IMR-90 (cell line): ENCODE measurements at regions of chr5 and their contacts with region 1.

Region 1: DNA sequence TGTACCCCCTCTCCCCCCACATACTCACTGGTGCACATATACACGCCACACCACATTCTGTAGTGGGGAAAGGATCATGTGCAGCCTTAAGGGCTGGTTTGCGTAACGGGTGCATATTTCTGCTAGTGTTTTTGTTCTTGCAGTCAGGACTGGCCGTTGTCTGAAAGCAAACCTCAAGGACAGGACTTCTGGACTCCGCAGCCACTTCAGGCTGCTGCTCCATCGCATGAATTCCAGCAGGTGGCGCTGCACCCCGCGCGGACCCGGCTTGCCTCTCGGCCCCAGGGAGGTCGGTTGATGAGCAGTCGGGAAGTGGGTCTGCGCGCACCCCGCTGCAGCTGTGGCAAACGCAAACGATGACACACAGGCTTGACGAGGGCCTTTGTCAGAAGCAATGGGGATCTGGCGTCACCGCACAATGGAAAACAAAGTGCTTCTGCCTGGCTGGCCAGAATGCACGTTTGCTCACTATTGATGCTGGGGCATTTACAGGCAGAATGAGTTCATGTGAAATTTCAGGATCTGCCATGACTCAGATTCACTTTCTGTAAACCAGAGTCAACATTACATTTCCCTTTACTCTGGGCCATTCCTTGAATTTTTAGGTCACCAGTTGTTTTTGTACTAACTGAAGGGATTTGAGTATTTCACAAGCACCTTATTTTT is 36.3 kb upstream of the GLRX start:
- DNase-seq: peak; percentile 100
- ATAC-seq: peak; percentile 80
- H3K4me3 ChIP-seq: peak overlapping the region; percentile 2; the same call in 1 of the 2 replicates
- H3K27ac ChIP-seq: peak overlapping the region; percentile 99
- H3K4me1 ChIP-seq: peaks cover 38% of the 10 kb centered on the region
- H3K27me3 ChIP-seq: no peaks in the 10 kb centered on the region
- CTCF ChIP-seq: peak; percentile 99
- POLR2A ChIP-seq: peak; percentile 42; the same call in 1 of the 2 replicates
- RAD21 ChIP-seq: peak; percentile 98

Region 2: DNA sequence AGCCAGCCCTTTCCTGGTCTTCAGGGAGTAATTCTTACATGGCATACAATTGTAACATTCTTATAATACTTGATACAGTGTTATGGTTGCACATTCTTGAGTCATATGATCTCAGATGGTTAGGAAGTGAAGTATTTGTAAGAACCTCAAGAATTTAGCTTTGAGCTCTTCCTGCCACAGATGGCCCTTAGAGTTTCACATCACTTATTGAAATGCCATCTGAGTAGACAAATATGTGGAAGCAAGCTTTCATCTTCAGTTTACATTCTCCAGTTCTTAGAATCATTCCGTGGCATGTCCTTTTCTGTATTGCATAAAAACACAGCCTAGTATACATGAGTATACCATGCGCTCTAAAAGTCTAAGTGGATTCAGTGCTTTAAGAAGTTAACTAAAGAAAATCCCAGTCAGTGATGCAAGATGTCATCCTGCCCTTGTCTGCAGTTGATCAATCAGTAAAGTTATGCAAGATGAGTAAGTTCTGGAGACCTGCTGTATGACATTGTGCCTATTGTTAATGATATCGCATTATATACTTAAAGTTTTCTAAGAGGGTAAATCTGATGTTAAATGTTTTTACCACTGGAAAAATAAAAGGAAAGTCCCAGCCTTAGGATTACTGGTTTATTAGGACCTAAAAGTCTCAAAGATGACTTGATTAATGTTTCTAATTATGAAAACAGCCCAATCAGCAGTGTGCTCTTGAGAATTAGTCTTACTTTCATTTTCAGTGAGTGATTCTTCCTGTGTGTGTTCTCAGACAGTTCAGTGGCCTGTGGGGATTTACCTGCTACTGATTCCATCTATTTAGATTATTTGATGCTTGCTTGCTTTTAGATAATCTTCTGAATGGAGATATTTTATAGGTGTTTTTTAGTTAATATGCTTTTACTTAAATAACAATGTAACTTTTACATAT is 98.3 kb before region 1 on chr5:
- CTCF ChIA-PET with region 1: no interaction called
- POLR2A ChIA-PET with region 1: no interaction called
- dilution Hi-C with region 1: no loop called
- in situ Hi-C with region 1: no loop called
- intact Hi-C with region 1: no loop called
- DNase-seq: peak; percentile 99
- ATAC-seq: peak; percentile 75
- H3K4me3 ChIP-seq: no peak overlapping the region; the same call in 1 of the 2 replicates
- H3K27ac ChIP-seq: peak overlapping the region; percentile 16; the same call in 1 of the 2 replicates
- H3K4me1 ChIP-seq: peaks cover 28% of the 10 kb centered on the region
- H3K27me3 ChIP-seq: no peaks in the 10 kb centered on the region
- CTCF ChIP-seq: no peak
- POLR2A ChIP-seq: no peak
- RAD21 ChIP-seq: no peak

Region 3: DNA sequence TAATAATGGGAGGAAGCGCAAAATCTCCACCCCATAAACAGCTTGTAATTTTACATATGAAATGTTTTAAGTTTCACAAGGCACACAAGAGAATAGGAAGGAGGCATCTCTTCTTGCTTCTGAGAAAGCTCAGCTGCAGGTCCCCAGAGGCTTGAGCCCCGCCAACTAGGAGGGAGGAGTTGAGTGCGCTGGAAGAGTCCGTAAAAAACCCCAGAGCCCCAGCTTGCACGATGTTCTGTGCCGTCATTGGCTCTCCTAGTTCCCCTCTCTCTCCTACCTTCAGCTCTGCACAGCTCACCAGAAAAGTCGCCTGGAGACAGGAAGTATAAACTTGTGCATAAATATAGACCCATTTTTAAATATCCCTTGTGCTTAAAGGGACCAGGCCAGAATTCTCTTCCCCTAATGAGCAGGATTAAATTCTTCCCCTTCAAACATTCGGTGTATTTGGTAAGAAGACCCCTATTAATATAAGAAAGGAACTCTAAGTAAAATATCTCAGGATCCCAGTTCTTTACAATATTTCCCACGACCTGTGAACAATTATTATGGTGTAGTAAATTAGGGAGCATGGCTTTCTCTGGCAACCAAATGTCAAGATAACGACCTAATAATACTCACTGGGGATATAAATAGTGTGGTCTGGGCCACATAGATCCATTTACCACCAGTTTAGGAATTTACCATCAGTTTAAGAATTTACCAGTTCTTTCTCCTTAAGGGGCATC is 49.9 kb before region 1 on chr5:
- CTCF ChIA-PET with region 1: no interaction called
- POLR2A ChIA-PET with region 1: no interaction called
- dilution Hi-C with region 1: no loop called
- in situ Hi-C with region 1: no loop called
- intact Hi-C with region 1: no loop called
- DNase-seq: peak; percentile 52
- ATAC-seq: peak; percentile 27
- H3K4me3 ChIP-seq: no peak overlapping the region
- H3K27ac ChIP-seq: peak overlapping the region; percentile 1; the same call in 1 of the 2 replicates
- H3K4me1 ChIP-seq: peaks cover 16% of the 10 kb centered on the region
- H3K27me3 ChIP-seq: no peaks in the 10 kb centered on the region
- CTCF ChIP-seq: no peak
- POLR2A ChIP-seq: no peak
- RAD21 ChIP-seq: no peak

Region 4: GRCh38 chr5:95846554-95847260 is 12.1 kb before region 1 on chr5:
- CTCF ChIA-PET with region 1: no interaction called
- POLR2A ChIA-PET with region 1: interaction called, 11 read pairs
- dilution Hi-C with region 1: no loop called
- in situ Hi-C with region 1: no loop called
- intact Hi-C with region 1: no loop called
- DNase-seq: peak; percentile 79
- ATAC-seq: peak; percentile 92
- H3K4me3 ChIP-seq: no peak overlapping the region
- H3K27ac ChIP-seq: no peak overlapping the region
- H3K4me1 ChIP-seq: peaks cover 16% of the 10 kb centered on the region
- H3K27me3 ChIP-seq: no peaks in the 10 kb centered on the region
- CTCF ChIP-seq: peak; percentile 96
- POLR2A ChIP-seq: peak; percentile 50
- RAD21 ChIP-seq: peak; percentile 93

Region 5: GRCh38 chr5:95973793-95974325 is 115.1 kb after region 1 on chr5:
- CTCF ChIA-PET with region 1: no interaction called
- POLR2A ChIA-PET with region 1: no interaction called
- dilution Hi-C with region 1: no loop called
- in situ Hi-C with region 1: no loop called
- intact Hi-C with region 1: no loop called
- DNase-seq: peak; percentile 92
- ATAC-seq: peak; percentile 85
- H3K4me3 ChIP-seq: no peak overlapping the region
- H3K27ac ChIP-seq: peak overlapping the region; percentile 70
- H3K4me1 ChIP-seq: peaks cover 13% of the 10 kb centered on the region
- H3K27me3 ChIP-seq: no peaks in the 10 kb centered on the region
- CTCF ChIP-seq: no peak
- POLR2A ChIP-seq: no peak
- RAD21 ChIP-seq: no peak

Region 6: GRCh38 chr5:96017951-96018350 is 159.2 kb after region 1 on chr5:
- CTCF ChIA-PET with region 1: no interaction called
- POLR2A ChIA-PET with region 1: no interaction called
- dilution Hi-C with region 1: no loop called
- in situ Hi-C with region 1: no loop called
- intact Hi-C with region 1: loop called (anchors 2 kb)
- DNase-seq: peak; percentile 98
- ATAC-seq: peak; percentile 80
- H3K4me3 ChIP-seq: no peak overlapping the region
- H3K27ac ChIP-seq: peak overlapping the region; percentile 70; the same call in 1 of the 2 replicates
- H3K4me1 ChIP-seq: peaks cover 10% of the 10 kb centered on the region
- H3K27me3 ChIP-seq: no peaks in the 10 kb centered on the region
- CTCF ChIP-seq: no peak
- POLR2A ChIP-seq: no peak
- RAD21 ChIP-seq: no peak

Region 7: DNA sequence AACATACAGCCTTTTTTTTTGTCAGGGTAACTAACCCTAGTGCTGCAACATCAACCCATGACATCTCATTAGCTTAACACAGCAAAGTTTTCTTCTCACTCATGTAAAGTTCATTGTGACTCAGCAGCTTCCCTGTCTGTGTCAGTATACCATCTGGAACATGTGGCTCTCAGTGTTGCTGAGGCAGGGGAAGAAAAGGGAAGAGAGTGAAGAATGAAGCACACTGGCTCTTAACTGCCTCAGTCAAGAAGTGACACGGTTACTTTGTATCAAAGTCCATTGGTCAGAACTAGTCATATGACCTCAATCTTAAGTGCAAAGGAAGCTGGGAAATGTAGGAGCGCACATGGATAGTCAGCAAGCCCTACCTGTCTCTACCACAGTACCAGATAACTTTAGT is 287.9 kb after region 1 on chr5:
- CTCF ChIA-PET with region 1: no interaction called
- POLR2A ChIA-PET with region 1: no interaction called
- dilution Hi-C with region 1: no loop called
- in situ Hi-C with region 1: no loop called
- intact Hi-C with region 1: loop called (anchors 10 kb)
- DNase-seq: peak; percentile 95
- ATAC-seq: peak; percentile 69
- H3K4me3 ChIP-seq: no peak overlapping the region
- H3K27ac ChIP-seq: peak overlapping the region; percentile 58; the same call in 1 of the 2 replicates
- H3K4me1 ChIP-seq: peaks cover 21% of the 10 kb centered on the region
- H3K27me3 ChIP-seq: no peaks in the 10 kb centered on the region
- CTCF ChIP-seq: no peak
- POLR2A ChIP-seq: no peak
- RAD21 ChIP-seq: no peak

Region 8: DNA sequence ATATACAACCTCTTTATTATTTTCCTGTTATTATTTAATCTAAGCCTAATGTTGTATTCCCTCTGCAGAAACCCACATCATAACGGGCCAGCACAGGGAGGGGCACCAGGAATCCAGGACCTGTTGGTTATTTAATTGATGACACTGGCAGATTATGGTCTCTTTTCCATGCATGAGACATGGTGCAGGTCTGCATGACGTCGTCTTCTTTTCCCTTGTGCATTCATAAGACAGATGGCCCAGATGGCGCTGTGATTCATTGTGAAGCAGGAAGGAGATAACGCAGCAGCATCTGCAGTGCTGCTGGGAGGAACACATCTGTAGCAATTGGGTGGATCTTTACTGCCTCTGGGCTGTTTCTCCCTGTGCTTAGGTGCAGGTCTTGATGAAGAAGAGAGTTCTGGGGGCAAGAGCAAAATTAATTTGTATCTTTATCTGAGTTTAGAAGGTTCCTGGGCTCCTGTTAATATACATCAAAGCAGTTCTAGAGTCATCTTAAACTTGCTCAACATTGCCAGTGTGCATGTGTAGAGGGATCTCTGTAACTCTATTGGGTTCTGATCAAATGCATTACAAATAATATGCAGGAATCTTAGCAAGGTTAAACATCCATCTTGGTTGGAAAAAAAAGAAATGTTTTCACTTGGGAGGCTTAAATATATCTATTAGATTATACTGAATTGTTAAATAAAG is 398.1 kb after region 1 on chr5:
- CTCF ChIA-PET with region 1: no interaction called
- POLR2A ChIA-PET with region 1: no interaction called
- dilution Hi-C with region 1: no loop called
- in situ Hi-C with region 1: no loop called
- intact Hi-C with region 1: loop called (anchors 1 kb)
- DNase-seq: peak; percentile 96
- ATAC-seq: peak; percentile 22
- H3K4me3 ChIP-seq: no peak overlapping the region
- H3K27ac ChIP-seq: peak overlapping the region; percentile 8; the same call in 1 of the 2 replicates
- H3K4me1 ChIP-seq: peaks cover 23% of the 10 kb centered on the region
- H3K27me3 ChIP-seq: no peaks in the 10 kb centered on the region
- CTCF ChIP-seq: peak; percentile 18; the same call in 1 of the 2 replicates
- POLR2A ChIP-seq: no peak
- RAD21 ChIP-seq: no peak

Region 9: GRCh38 chr5:96336351-96336985 is 477.7 kb after region 1 on chr5:
- CTCF ChIA-PET with region 1: interaction called, 4 read pairs
- POLR2A ChIA-PET with region 1: no interaction called
- dilution Hi-C with region 1: no loop called
- in situ Hi-C with region 1: loop called (anchors 5 kb)
- intact Hi-C with region 1: loop called (anchors 1 kb)
- DNase-seq: peak; percentile 93
- ATAC-seq: peak; percentile 88
- H3K4me3 ChIP-seq: no peak overlapping the region
- H3K27ac ChIP-seq: peak overlapping the region; percentile 95; the same call in 1 of the 2 replicates
- H3K4me1 ChIP-seq: peaks cover 16% of the 10 kb centered on the region
- H3K27me3 ChIP-seq: no peaks in the 10 kb centered on the region
- CTCF ChIP-seq: peak; percentile 89
- POLR2A ChIP-seq: no peak
- RAD21 ChIP-seq: peak; percentile 97